Right ventricle myocardium inferior (tissue), 1 donor: ENCODE measurements at regions of chr17 and their contacts with region 1.

Region 1: GRCh38 chr17:38584350-38584925 is 21.3 kb downstream of the SRCIN1 start:
- DNase-seq: peak; percentile 83
- ATAC-seq: peak; percentile 79

Region 2: GRCh38 chr17:38605888-38606645 is 21.6 kb after region 1 on chr17 and contains the start of gene SRCIN1:
- intact Hi-C with region 1: loop called (anchors 2 kb)
- DNase-seq: peak; percentile 81
- ATAC-seq: no peak
- total RNA-seq, gene SRCIN1: 1.4 TPM